Dendritic cell treated with granulocyte-macrophage colony-stimulating factor and Interleukin-4, amounts not matched to agents 40 ng/mL and 50 ng/mL, for 4 days (primary cell): ENCODE measurements at regions of chr20 and their contacts with region 1.

Region 1: DNA sequence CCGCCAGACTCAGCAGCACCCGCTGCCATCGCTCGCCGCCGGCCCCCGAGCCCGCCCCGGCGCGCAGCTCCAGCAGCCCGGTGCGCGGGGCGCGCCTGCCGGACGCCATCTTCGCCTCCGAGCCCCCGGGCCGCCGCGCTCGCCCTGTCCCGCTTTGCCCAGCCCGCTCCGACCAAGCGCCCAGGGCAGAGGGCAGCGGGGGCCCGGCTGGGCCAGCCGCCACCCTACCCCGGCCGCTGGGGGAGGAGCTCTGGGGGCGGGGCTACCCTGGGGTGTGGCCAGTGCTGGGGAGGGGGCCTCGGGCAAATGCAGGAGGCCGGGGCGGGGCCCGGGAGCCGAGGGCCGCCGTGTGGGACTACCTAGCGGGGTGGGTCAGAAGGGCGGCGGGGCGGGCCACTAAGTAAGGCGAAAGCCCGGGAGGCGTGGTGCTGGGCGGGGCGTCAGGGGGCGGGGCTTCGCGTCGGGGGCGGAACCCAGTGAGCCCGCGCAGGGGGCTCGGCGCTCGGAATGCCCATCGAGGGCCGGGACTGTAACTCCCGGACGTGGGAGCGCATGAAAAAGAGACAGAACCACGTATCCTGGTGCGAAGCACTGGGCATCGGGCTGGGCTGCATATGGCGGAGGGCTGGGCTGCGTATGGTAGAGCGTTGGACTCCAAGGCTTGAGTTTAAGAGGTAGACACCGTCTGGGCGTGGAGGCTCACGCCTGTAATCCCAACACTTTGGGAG is at the start of gene SNTA1:
- H3K4me3 Mint-ChIP-seq: peak within 1 kb of the TSS; percentile 91
- H3K27ac Mint-ChIP-seq: peak within 1 kb of the TSS; percentile 66
- H3K4me1 Mint-ChIP-seq: peaks cover 25% of the 10 kb centered on the region
- H3K27me3 Mint-ChIP-seq: peaks cover 18% of the 10 kb centered on the region

Region 2: GRCh38 chr20:33318096-33318429 is 125.6 kb before region 1 on chr20:
- intact Hi-C with region 1: no loop called
- H3K4me3 Mint-ChIP-seq: no peak overlapping the region
- H3K27ac Mint-ChIP-seq: no peak overlapping the region
- H3K4me1 Mint-ChIP-seq: no peaks in the 10 kb centered on the region
- H3K27me3 Mint-ChIP-seq: peaks cover 2% of the 10 kb centered on the region

Region 3: GRCh38 chr20:33359462-33359861 is 84.2 kb before region 1 on chr20:
- intact Hi-C with region 1: no loop called
- H3K4me3 Mint-ChIP-seq: no peak overlapping the region
- H3K27ac Mint-ChIP-seq: no peak overlapping the region
- H3K4me1 Mint-ChIP-seq: no peaks in the 10 kb centered on the region
- H3K27me3 Mint-ChIP-seq: no peaks in the 10 kb centered on the region

Region 4: DNA sequence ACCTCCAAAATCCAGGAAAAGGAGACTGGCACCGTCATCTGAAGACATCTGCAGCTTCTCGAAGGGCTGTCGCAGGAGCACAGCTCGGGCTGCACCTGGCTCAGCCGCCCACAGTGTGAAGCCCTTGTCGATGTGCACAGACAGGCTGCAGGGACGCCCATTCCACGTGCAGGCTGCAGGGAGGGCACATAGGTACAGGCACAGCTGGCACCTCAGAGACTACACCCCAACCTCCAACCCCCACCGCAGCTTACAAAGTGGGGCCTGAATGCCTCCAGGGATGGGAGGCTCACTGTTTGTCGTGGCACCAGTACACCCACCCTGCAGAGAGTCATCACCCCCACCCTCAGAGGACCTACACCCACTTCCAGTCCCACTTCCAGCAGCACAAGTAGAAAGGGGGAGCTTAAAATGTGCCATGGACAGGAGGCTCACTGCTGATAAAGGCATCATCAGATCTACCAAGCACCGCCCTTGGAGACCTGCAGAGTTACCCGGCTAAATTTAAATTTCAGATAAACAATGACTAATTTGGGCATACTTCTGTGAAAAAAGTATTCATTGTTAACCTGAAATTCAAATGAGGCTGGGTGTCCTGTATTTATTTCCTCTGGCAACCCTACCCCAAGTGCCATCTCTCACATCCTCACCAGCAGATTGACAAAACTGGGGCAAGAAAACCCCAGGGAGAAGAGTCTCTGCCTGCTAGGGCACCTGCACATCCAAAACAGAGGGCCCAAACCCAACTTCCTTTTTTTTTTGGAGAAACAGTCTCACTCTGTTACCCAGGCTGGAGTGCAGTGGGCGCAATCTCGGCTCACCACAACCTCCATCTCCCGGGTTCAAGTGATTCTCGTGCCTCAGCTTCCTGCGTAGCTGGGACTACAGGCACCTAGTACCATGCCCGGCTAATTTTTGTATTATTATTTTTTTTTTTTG is 34.7 kb before region 1 on chr20:
- intact Hi-C with region 1: loop called (anchors 5 kb)
- H3K4me3 Mint-ChIP-seq: no peak overlapping the region
- H3K27ac Mint-ChIP-seq: peak overlapping the region; percentile 80
- H3K4me1 Mint-ChIP-seq: peaks cover 59% of the 10 kb centered on the region
- H3K27me3 Mint-ChIP-seq: no peaks in the 10 kb centered on the region

Region 5: GRCh38 chr20:33475381-33476150 is 31.9 kb after region 1 on chr20:
- intact Hi-C with region 1: loop called (anchors 2 kb)
- H3K4me3 Mint-ChIP-seq: no peak overlapping the region
- H3K27ac Mint-ChIP-seq: peak overlapping the region; percentile 21
- H3K4me1 Mint-ChIP-seq: peaks cover 12% of the 10 kb centered on the region
- H3K27me3 Mint-ChIP-seq: no peaks in the 10 kb centered on the region

Region 6: DNA sequence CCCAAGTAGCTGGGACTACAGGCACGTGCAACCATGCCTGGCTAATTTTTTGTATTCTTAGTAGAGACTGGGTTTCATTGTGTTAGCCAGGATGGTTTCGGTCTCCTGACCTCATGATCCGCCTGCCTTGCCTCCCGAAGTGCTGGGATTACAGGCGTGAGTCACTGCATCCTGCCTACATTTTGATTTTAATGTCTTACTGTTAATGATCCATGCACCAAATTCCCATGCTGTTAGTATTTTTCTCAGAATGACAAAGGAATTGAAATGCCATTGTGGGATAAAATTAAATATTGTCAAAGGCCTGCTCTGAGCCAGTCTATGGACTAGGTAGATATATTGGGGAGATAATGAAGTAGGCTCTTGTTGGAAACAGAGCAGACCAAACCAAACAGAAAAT is 74.4 kb after region 1 on chr20:
- intact Hi-C with region 1: no loop called
- H3K4me3 Mint-ChIP-seq: no peak overlapping the region
- H3K27ac Mint-ChIP-seq: no peak overlapping the region
- H3K4me1 Mint-ChIP-seq: peaks cover 5% of the 10 kb centered on the region
- H3K27me3 Mint-ChIP-seq: no peaks in the 10 kb centered on the region